Aorta (tissue), 5 donors: ENCODE measurements at regions of chr15 and their contacts with region 1.

Region 1: DNA sequence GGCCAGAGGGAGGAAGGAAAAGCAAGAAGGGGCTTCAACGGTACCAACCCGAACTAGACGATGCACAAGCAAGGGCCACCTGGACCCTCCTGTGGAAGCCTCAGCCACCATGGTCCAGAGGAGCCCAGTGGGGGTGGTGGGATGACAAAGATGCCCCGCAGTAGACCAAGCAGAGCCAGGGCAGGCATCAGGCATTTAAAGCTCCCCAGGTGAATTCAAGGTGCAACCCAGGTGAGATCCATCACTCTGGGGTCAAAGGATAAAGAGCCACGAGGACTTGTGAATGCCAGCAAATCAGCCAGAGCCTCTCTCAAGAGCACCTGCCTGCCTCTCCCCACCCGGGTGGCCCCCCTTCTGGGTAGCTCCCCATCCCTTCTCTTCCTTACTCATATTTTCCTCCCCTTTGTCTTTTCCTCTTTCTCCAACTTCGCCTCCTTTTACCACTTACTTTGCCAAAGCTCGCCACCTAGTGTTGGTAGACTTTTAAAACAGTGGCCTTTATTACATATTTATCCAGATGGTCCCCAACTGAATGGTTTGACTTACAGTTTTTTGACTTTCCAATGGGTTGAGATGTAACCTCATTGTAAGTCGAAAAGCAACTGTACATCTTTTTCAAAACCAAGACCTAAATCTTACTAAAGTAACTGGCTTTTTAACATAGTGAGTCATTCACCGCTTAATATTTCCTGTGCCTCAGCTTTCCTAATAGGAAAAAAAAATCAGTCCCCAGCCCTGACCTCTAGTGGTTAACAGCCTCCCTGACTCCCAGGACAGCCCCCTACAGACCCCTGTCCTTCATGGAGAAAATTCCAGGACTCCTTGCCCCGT is 18.8 kb downstream of the PLA2G4F start:
- DNase-seq: peak; percentile 25 to 39
- ATAC-seq: no peak
- H3K4me3 ChIP-seq: no peak overlapping the region
- H3K27ac ChIP-seq: no peak overlapping the region
- H3K4me1 ChIP-seq: no peaks in the 10 kb centered on the region
- H3K27me3 ChIP-seq: no peaks in the 10 kb centered on the region

Region 2: DNA sequence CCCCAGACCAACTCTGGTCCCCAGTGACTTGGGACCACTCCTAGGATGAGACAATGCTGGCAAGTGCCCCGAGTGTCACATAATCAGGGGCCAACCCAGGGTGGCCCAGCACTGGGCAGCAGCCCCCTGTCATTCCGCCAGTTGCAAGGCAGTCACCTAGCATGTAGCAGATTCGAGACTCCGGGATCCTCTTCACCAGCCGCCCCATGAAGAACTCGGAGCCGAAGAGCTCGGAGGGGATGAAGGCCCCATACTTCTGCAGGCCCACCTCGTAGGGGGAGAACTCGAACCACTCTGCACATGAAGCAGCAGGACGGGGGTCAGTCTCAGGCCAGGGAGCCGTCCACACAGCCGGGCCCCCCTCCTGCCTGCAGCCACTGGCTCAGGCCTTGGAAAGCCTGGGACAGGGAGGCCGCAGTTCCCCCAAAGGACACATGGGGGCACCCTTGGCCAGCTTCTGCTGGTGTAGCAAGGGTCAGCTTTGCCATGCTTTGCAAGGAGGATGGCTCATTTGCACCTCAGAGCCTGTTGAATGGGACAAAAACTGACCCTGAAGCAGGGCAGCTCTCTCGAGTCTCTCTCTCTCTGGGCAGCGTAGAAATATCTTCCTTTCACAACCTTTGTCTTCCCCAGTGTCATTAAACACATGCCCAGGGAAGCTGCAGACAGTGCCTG is 148.2 kb before region 1 on chr15:
- intact Hi-C with region 1: loop called in 1 of 2 experiments (anchors 10 kb)
- DNase-seq: peak; percentile 86 to 95
- ATAC-seq: peak; percentile 87
- H3K4me3 ChIP-seq: no peak overlapping the region
- H3K27ac ChIP-seq: no peak overlapping the region
- H3K4me1 ChIP-seq: peaks cover 0 to 2% of the 10 kb centered on the region in 2 donors
- H3K27me3 ChIP-seq: no peaks in the 10 kb centered on the region

Region 3: DNA sequence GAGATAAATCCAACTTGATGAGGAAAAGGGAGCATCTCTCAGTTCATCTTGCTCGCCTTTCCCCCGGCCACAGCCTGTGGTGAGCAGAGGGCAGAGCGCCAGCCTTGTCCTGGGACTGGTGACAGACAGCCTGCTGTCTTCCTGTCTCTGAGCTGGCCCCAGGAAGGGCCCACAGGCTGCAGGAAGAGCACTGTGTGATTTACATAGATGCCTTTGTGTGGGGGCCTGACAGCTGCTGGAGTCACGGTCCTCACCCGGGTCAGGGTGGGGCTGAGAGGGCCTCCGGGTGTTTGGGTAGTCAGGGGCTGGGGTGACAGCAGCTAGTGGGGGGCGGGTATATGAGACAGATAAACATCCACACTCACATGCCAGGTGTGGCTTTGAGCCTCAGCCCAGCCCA is 72.6 kb before region 1 on chr15:
- intact Hi-C with region 1: loop called (anchors 1 to 5 kb)
- DNase-seq: no peak
- ATAC-seq: no peak
- H3K4me3 ChIP-seq: no peak overlapping the region
- H3K27ac ChIP-seq: no peak overlapping the region
- H3K4me1 ChIP-seq: no peaks in the 10 kb centered on the region
- H3K27me3 ChIP-seq: no peaks in the 10 kb centered on the region